B cell (primary cell): ENCODE measurements at regions of chr5 and their contacts with region 1.

Region 1: DNA sequence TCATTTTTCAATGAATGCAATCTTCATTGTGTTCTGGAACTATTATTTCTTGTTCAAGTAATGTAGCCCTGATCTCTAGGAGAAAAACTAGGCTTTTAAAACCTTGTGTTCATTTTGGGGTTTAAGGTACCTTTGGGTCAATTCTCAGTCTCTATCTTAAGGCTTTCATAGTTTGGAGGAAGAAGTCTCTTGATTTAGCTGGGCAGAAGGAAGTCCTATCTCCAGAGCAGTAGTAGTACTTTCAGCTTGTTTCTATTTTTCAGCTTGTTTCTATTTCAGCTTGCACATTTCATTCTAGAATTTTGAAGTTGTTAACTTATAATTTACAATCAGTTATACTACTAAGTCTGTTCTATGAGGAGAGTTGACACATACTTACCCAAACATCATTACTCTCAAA is 15.2 kb downstream of the CSNK1G3 start:
- DNase-seq: no peak
- ATAC-seq: no peak
- H3K4me3 ChIP-seq: no peak overlapping the region
- H3K4me3 Mint-ChIP-seq: peak overlapping the region; percentile 30
- H3K27ac ChIP-seq: no peak overlapping the region
- H3K27ac Mint-ChIP-seq: peak overlapping the region; percentile 17
- H3K4me1 ChIP-seq: peaks cover 36 to 57% of the 10 kb centered on the region in 2 donors
- H3K4me1 Mint-ChIP-seq: peaks cover 77% of the 10 kb centered on the region
- H3K27me3 ChIP-seq: no peaks in the 10 kb centered on the region
- H3K27me3 Mint-ChIP-seq: no peaks in the 10 kb centered on the region
- CTCF ChIP-seq: no peak

Region 2: DNA sequence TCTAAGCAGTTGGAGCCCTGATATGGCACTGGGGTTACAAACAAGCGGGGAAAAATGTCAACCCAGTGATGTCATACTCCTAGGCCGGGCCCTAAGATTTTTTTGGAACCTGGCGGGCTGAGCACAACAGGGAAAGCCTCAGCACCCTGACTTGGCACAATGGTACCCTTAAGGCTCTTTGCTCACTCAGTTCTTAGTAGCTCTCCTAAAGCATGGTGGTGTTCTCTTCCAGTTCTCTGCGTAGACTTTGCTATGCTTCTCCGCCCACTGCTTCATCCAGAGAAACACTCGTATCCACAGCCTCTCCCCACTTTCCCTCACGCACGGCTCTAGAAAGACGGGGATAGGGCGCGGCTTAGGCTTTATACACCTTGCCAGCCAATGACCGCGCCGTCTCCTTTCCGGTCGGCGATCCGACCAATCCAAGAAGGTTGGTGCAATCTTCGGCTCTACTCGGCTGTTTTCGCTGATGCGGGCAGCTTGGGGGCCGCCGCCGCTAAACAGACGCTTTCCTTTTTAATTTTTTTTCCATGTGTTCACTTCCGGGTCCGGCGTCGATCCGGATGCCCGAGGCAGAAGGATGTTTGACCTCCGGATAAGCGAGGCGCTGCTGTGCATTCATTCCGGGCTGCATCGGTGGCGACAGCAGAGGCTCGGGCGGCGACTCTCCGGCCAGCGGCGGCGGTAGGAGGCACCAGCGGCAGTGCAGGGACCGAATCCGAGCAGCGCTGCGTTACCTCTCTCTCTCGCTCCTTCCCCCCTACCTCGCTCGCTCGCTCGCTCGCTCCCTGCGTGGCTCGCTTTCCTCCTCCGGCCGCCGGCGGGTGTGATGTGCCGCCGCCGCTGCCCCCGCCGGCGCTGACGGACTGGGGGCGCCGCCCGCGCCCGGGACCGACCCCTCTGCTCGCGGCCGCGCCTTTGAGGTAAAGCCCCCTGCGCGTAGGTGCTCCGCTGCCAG is 15.3 kb before region 1 on chr5 and contains the start of gene CSNK1G3:
- CTCF ChIA-PET with region 1: no interaction called
- POLR2A ChIA-PET with region 1: no interaction called
- intact Hi-C with region 1: loop called (anchors 1 kb)
- DNase-seq: peak; percentile 95
- ATAC-seq: peak; percentile 89
- H3K4me3 ChIP-seq: peak within 1 kb of the TSS; percentile 86 to 92 (median 89)
- H3K4me3 Mint-ChIP-seq: peak within 1 kb of the TSS; percentile 100
- H3K27ac ChIP-seq: peak within 1 kb of the TSS; percentile 89 to 90
- H3K27ac Mint-ChIP-seq: peak within 1 kb of the TSS; percentile 99
- H3K4me1 ChIP-seq: peaks cover 33 to 39% of the 10 kb centered on the region in 2 donors
- H3K4me1 Mint-ChIP-seq: peaks cover 41% of the 10 kb centered on the region
- H3K27me3 ChIP-seq: no peaks in the 10 kb centered on the region
- H3K27me3 Mint-ChIP-seq: peaks cover 3% of the 10 kb centered on the region
- CTCF ChIP-seq: no peak
- total RNA-seq, gene CSNK1G3: 140 and 148 TPM in 2 replicates

Region 3: GRCh38 chr5:123582550-123583285 is 55.5 kb after region 1 on chr5:
- CTCF ChIA-PET with region 1: no interaction called
- POLR2A ChIA-PET with region 1: no interaction called
- intact Hi-C with region 1: loop called (anchors 5 kb)
- DNase-seq: no peak
- ATAC-seq: no peak
- H3K4me3 ChIP-seq: no peak overlapping the region
- H3K4me3 Mint-ChIP-seq: no peak overlapping the region
- H3K27ac ChIP-seq: no peak overlapping the region
- H3K27ac Mint-ChIP-seq: no peak overlapping the region
- H3K4me1 ChIP-seq: no peaks in the 10 kb centered on the region
- H3K4me1 Mint-ChIP-seq: peaks cover 2% of the 10 kb centered on the region
- H3K27me3 ChIP-seq: no peaks in the 10 kb centered on the region
- H3K27me3 Mint-ChIP-seq: no peaks in the 10 kb centered on the region
- CTCF ChIP-seq: no peak